ENCODE measurements at regions of chr5 and their contacts with region 1.

Region 1: DNA sequence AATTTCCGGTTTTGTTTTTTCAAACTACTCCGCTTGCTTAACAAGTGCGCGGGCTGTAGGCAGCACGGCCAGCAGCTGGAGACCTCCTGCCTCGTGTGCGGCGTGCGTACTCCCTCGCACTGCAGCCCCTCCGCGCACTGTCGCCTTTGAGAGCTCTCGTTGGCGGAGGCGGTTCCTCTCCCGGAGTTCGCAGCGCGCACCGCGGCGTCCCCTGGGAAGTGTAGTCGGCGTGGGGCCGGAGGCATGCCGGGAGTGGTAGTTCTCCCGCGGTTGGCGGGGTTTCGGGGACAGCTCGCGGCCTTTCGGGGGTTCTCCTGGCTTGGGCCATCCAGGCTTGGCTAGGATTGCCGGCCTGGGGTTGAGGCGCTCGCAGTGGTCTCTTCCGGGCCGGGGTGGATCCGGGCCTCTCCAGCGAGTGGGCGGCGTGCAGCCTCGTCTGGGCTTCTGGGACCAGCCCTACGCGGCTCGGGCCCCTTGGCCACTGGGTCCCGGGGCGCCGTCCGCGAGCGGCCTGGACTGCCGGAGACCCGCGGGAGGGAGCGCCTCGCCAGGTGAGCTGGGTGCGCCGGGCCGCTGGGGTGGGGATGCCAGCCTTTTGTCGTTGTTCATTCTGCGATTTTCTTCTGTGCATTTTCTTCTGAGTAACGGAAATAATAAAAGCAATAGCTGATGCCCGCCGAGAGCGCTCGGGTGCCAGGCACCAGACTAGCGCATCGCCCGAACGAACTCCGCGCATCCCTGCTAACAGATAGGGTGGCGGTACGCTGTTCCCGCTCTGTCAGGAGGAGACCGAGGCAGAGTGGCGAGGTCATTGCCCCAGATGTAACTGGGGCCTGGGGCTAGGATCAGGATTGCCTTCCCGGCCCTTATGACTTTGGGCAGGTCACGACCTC is at the start of gene ZNF354C:
- DNase-seq: peak; percentile 81 to 89
- ATAC-seq: peak; percentile 94 to 98 (median 97)
- H3K4me3 ChIP-seq: peak within 1 kb of the TSS; percentile 71
- H3K4me3 Mint-ChIP-seq: peak within 1 kb of the TSS; percentile 96
- H3K27ac ChIP-seq: peak within 1 kb of the TSS; percentile 70
- H3K27ac Mint-ChIP-seq: peak within 1 kb of the TSS; percentile 87 to 91
- H3K4me1 ChIP-seq: peaks cover 15% of the 10 kb centered on the region
- H3K4me1 Mint-ChIP-seq: peaks cover 33 to 41% of the 10 kb centered on the region in 2 donors
- H3K27me3 ChIP-seq: no peaks in the 10 kb centered on the region
- H3K27me3 Mint-ChIP-seq: peaks cover 7 to 13% of the 10 kb centered on the region in 2 donors
- CTCF ChIP-seq: no peak
- total RNA-seq, gene ZNF354C: 4.0 to 7.4 (median 4.9) TPM

Region 2: GRCh38 chr5:178667101-178667500 is 393.3 kb before region 1 on chr5:
- intact Hi-C with region 1: no loop called
- DNase-seq: no peak
- ATAC-seq: no peak
- H3K4me3 ChIP-seq: no peak overlapping the region
- H3K4me3 Mint-ChIP-seq: no peak overlapping the region
- H3K27ac ChIP-seq: no peak overlapping the region
- H3K27ac Mint-ChIP-seq: no peak overlapping the region
- H3K4me1 ChIP-seq: no peaks in the 10 kb centered on the region
- H3K4me1 Mint-ChIP-seq: no peaks in the 10 kb centered on the region
- H3K27me3 ChIP-seq: no peaks in the 10 kb centered on the region
- H3K27me3 Mint-ChIP-seq: peaks cover 0 to 18% of the 10 kb centered on the region in 2 donors
- CTCF ChIP-seq: no peak

Region 3: DNA sequence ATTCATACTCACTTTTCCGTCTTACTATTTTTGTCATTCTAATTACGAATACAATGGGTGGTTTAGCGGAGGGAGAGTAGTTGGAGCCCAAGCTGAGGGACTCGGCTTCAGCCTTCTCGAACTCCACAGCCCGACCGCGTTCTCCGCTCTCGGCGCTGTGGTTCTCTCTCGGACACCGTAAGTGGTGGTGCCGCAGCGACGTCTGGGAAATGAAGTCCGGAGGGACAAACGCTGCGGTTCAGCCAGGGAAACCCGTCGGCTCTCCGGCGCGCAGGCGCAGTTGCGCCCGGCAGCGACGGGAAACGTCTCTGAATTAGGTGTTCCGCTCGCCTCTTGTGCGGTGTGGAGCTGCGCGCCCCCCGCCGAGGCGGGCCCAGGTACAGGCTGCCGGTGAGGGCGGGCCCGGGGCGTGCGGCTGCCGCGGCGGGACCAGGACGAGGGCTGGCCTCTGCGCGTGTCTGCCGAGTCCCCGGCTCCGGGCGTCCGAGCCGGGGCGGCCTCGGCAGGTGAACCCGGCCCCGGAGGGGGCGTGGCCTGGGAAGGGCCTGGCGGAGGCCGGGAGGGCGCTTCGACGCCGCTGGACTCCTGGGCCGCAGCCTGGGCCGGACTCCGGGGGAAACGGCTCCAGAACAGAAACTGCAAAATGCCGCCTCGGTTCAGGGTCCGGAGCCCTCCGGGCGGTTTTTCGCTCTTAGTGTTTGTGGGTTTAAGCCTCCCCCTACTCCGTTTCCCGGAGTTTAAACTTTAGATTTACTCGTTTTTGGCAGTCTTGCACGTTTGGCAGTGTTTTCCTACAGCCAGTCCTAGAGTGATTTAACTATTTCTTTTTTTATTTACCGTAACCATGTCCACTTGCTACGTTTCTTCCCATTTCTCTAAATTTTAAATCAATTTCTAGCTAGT is 36.6 kb before region 1 on chr5 and contains the start of gene ZNF879:
- intact Hi-C with region 1: loop called (anchors 1 kb)
- DNase-seq: peak; percentile 91 to 97
- ATAC-seq: peak; percentile 93 to 95 (median 94)
- H3K4me3 ChIP-seq: peak within 1 kb of the TSS; percentile 65
- H3K4me3 Mint-ChIP-seq: peak within 1 kb of the TSS; percentile 97
- H3K27ac ChIP-seq: peak within 1 kb of the TSS; percentile 47
- H3K27ac Mint-ChIP-seq: peak within 1 kb of the TSS; percentile 83 to 88
- H3K4me1 ChIP-seq: peaks cover 17% of the 10 kb centered on the region
- H3K4me1 Mint-ChIP-seq: peaks cover 13 to 16% of the 10 kb centered on the region in 2 donors
- H3K27me3 ChIP-seq: no peaks in the 10 kb centered on the region
- H3K27me3 Mint-ChIP-seq: peaks cover 0 to 12% of the 10 kb centered on the region in 2 donors
- CTCF ChIP-seq: no peak
- total RNA-seq, gene ZNF879: 4.2 to 7.6 (median 5.1) TPM

Region 4: DNA sequence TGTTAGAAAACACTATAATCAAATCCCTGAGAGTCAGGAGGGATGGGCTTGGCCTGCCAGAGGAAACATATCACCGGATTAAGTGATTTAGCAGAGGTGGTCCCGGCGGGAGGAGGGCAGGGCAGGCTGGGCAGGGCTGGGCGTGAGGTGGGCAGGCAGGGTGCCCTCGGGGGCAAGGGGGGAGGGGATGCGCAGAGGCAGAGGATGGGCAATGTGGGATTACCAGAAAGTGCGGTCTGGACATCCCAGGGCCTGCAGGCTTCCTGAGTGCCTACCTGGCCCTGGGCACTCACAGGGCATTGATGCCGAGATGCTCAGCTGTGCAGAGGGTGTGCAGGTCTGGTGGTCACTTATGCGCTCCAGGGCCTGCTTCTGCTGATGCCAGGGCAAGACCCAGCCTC is 169.7 kb after region 1 on chr5:
- intact Hi-C with region 1: no loop called
- DNase-seq: no peak
- ATAC-seq: no peak
- H3K4me3 ChIP-seq: no peak overlapping the region
- H3K4me3 Mint-ChIP-seq: no peak overlapping the region
- H3K27ac ChIP-seq: no peak overlapping the region
- H3K27ac Mint-ChIP-seq: no peak overlapping the region
- H3K4me1 ChIP-seq: no peaks in the 10 kb centered on the region
- H3K4me1 Mint-ChIP-seq: no peaks in the 10 kb centered on the region
- H3K27me3 ChIP-seq: no peaks in the 10 kb centered on the region
- H3K27me3 Mint-ChIP-seq: peaks cover 0 to 2% of the 10 kb centered on the region in 2 donors
- CTCF ChIP-seq: no peak